PC-3 (cell line): ENCODE measurements at regions of chr1 and their contacts with region 1.

Region 1: GRCh38 chr1:147093411-147093810 is 78.9 kb downstream of the PRKAB2 start:
- DNase-seq: peak; percentile 54
- ATAC-seq: no peak
- H3K4me3 ChIP-seq: no peak overlapping the region
- H3K27ac ChIP-seq: no peak overlapping the region
- H3K4me1 ChIP-seq: peaks cover 13% of the 10 kb centered on the region
- H3K27me3 ChIP-seq: no peaks in the 10 kb centered on the region
- CTCF ChIP-seq: no peak

Region 2: DNA sequence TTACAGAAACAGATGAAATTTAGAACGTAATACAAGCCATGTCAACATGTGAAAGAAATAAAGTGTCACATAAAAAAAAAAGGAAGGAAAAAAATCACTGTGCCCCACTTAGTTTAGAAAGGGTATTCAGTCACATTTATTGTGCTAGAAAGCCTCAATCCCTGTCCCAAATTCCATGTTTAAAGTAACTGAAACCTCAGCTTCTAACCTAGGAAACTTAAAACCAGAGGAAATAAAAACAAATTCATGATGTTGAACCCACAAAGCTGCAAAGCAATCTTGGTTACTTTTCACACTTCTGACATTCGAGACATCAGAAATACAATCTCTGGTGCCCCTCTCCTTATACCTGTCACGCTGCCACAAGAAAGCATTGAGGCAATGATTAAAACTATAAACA is 53.5 kb before region 1 on chr1:
- CTCF ChIA-PET with region 1: no interaction called
- POLR2A ChIA-PET with region 1: no interaction called
- intact Hi-C with region 1: no loop called
- DNase-seq: no peak
- ATAC-seq: no peak
- H3K4me3 ChIP-seq: no peak overlapping the region
- H3K27ac ChIP-seq: no peak overlapping the region
- H3K4me1 ChIP-seq: no peaks in the 10 kb centered on the region
- H3K27me3 ChIP-seq: no peaks in the 10 kb centered on the region
- CTCF ChIP-seq: no peak

Region 3: GRCh38 chr1:147072370-147073061 is 20.9 kb before region 1 on chr1:
- CTCF ChIA-PET with region 1: no interaction called
- POLR2A ChIA-PET with region 1: interaction called, 13 read pairs
- intact Hi-C with region 1: loop called (anchors 1 kb)
- DNase-seq: no peak
- ATAC-seq: no peak
- H3K4me3 ChIP-seq: no peak overlapping the region
- H3K27ac ChIP-seq: no peak overlapping the region
- H3K4me1 ChIP-seq: peaks cover 13% of the 10 kb centered on the region
- H3K27me3 ChIP-seq: no peaks in the 10 kb centered on the region
- CTCF ChIP-seq: no peak

Region 4: DNA sequence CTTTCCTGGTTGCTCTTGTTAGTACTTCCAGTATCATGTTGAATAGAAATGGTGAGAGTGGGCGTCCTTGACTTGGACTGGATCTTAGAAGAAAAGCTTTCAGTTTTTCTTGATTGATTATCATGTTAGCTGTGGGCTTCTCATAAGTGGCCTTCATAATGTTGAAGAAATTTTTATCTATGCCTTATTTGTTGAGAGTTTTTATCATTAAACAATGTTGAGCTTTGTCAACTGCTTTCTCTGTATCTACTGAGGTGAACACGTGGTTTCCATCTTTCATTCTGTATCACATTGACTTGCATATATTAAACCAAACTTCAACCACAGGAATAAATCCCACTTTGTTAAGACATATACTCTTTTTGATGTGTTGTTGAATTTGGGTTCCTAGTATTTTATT is 49.5 kb after region 1 on chr1:
- CTCF ChIA-PET with region 1: interaction called, 11 read pairs
- POLR2A ChIA-PET with region 1: no interaction called
- intact Hi-C with region 1: no loop called
- DNase-seq: no peak
- ATAC-seq: no peak
- H3K4me3 ChIP-seq: no peak overlapping the region
- H3K27ac ChIP-seq: no peak overlapping the region
- H3K4me1 ChIP-seq: no peaks in the 10 kb centered on the region
- H3K27me3 ChIP-seq: no peaks in the 10 kb centered on the region
- CTCF ChIP-seq: no peak